Activated CD4-positive, alpha-beta T cell treated with anti-CD3 and anti-CD28 coated beads, Interleukin-2, amount 10 ng/mL, durations not matched to agents 7 days and 5 days (primary cell): ENCODE measurements at regions of chr2 and their contacts with region 1.

Region 1: GRCh38 chr2:197434541-197435513 is at the start of gene SF3B1:
- DNase-seq: peak; percentile 99
- H3K4me3 Mint-ChIP-seq: peak within 1 kb of the TSS; percentile 89
- H3K27ac Mint-ChIP-seq: peak within 1 kb of the TSS; percentile 100
- H3K4me1 Mint-ChIP-seq: peaks cover 49% of the 10 kb centered on the region
- H3K27me3 Mint-ChIP-seq: no peaks in the 10 kb centered on the region
- total RNA-seq, gene SF3B1: 334 to 347 TPM

Region 2: DNA sequence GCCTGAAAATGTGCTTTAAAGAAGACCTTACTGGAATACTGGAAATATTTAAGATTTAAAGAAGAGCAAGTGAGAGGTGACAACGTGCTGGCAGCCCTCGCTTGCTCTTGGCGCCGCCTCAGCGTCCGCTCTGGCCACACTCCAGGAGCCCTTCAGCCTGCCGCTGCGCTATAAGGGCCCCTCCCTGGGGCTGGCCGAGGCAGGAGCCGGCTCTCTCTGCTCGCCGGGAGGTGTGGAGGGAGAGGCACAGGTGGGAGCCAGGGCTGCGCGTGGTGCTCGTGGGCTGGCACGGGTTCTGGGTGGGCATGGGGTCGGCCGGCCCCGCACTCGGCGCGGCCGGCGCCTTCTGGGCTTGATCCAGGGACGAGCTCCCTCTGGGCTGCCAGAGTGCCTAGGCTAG is 15.6 kb after region 1 on chr2:
- CTCF ChIA-PET with region 1: interaction called, 23 read pairs
- POLR2A ChIA-PET with region 1: interaction called, 6 read pairs
- DNase-seq: no peak
- H3K4me3 Mint-ChIP-seq: no peak overlapping the region
- H3K27ac Mint-ChIP-seq: no peak overlapping the region
- H3K4me1 Mint-ChIP-seq: peaks cover 26% of the 10 kb centered on the region
- H3K27me3 Mint-ChIP-seq: no peaks in the 10 kb centered on the region